ENCODE measurements at regions of chr3 and their contacts with region 1.

Region 1: DNA sequence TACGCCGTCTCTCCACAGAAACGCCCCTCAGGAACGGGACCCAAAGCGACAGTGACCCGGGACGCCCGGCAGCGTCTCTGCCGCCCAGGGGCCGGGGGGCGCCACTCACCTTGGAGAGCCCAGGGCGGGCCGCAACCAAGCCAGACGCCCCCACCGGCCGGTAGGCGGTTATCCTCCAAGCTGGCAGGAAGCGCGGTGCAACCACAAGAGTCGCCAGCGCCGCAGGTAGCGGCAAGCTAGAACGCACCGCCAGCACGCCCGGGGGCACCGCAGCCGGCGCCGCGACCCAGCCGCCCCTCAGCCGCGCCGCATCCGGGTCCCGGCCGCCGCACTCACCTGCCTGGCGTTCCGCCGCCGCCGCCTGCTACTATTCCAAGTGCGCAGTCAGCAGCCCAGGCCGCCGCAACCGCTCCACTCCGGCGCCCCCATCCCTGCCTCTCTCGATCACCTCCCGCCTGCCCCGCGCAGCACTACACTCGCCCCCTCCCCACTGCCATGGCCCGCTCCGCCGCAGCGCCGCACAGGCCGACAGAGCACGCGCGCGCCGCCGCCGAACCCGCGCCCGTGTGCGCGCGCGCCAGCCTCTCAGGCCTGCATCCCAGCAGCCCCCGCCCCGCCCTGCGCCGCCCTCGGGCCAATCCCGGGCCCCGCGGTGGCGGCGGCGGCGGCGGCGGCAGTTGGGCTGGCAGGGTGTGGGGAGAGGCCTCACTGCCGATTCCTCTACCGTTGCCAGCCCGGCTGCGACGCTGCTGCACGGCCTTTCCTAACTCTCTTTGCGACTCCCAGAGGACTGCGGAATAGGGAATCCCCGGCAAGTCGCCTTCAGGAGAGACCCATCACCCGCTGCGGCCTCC is at the start of gene PIK3CB:
- DNase-seq: peak; percentile 73 to 93 (median 87)
- H3K4me3 ChIP-seq: peak within 1 kb of the TSS; percentile 73 to 99 (median 94)
- H3K27ac ChIP-seq: peak within 1 kb of the TSS; percentile 88 to 99 (median 97)
- H3K27me3 ChIP-seq: no peaks in the 10 kb centered on the region
- CTCF ChIP-seq: peak in 44 of 56 donors; percentile 4 to 55 (median 31)
- total RNA-seq, gene PIK3CB: 36.8 to 102 (median 70.6) TPM

Region 2: GRCh38 chr3:138608322-138609135 is 226.1 kb before region 1 on chr3 and contains the start of gene FAIM:
- intact Hi-C with region 1: loop called (anchors 5 kb)
- DNase-seq: peak; percentile 47 to 79 (median 62)
- H3K4me3 ChIP-seq: peak within 1 kb of the TSS; percentile 44 to 91 (median 80)
- H3K27ac ChIP-seq: peak within 1 kb of the TSS; percentile 55 to 99 (median 94)
- H3K27me3 ChIP-seq: no peaks in the 10 kb centered on the region
- CTCF ChIP-seq: peak in 5 of 56 donors; percentile 9 to 26 (median 15)
- total RNA-seq, gene FAIM: 6.4 to 20.4 (median 11.4) TPM

Region 3: GRCh38 chr3:138705675-138706074 is 128.9 kb before region 1 on chr3:
- intact Hi-C with region 1: loop called (anchors 10 kb)
- DNase-seq: no peak
- H3K4me3 ChIP-seq: no peak overlapping the region
- H3K27ac ChIP-seq: no peak overlapping the region
- H3K27me3 ChIP-seq: no peaks in the 10 kb centered on the region
- CTCF ChIP-seq: no peak

Region 4: DNA sequence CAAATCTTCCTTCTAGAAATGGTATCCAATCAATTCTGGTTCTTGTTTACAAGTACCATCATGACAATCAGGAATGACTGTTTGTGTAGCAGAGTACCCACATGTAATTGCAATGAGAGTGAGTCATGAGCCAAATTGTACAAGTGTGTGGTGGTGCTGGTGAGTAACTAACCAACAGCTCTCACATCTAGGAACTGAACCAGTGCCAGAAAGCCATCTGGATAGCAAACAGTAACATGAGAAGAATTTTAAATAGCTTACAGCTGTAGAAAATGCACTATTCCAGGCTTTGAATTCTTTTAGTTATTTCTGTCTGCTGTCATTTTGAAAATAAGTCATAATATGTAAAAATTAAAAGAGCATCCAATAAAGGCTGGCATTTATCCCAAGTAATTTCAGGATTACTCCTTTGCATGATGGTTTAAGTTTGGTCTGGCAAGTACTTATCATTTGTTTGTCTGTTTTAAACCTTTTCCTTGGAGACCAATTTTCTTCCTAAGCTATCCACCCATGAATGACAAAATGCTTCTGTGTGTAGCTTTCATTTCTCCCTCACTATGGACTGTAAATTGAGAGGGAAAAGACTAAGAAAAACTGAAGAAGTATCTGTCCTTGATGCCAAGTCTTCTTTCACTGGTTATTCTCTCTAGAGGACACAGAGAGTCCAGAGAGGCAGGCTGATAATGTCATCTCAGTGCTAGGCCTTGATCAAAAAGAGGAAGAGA is 59.9 kb before region 1 on chr3:
- intact Hi-C with region 1: loop called (anchors 1 to 2 kb)
- DNase-seq: peak in 7 of 10 donors; percentile 46 to 88 (median 59)
- H3K4me3 ChIP-seq: peak overlapping the region in 8 of 59 donors; percentile 3 to 38 (median 20)
- H3K27ac ChIP-seq: peak overlapping the region in 58 of 59 donors; percentile 64 to 95 (median 89)
- H3K27me3 ChIP-seq: no peaks in the 10 kb centered on the region
- CTCF ChIP-seq: peak in 35 of 56 donors; percentile 5 to 55 (median 24)